ENCODE measurements at regions of chr1 and their contacts with region 1.

Region 1: GRCh38 chr1:62870148-62870547 is 86.2 kb downstream of the ATG4C start:
- ATAC-seq: no peak
- H3K4me3 ChIP-seq: no peak overlapping the region
- H3K27ac ChIP-seq: no peak overlapping the region
- H3K4me1 ChIP-seq: peaks cover 0 to under 1% of the 10 kb centered on the region in 2 donors

Region 2: GRCh38 chr1:62765981-62766380 is 104.2 kb before region 1 on chr1:
- in situ Hi-C with region 1: no loop called
- ATAC-seq: no peak
- H3K4me3 ChIP-seq: no peak overlapping the region
- H3K27ac ChIP-seq: no peak overlapping the region
- H3K4me1 ChIP-seq: no peaks in the 10 kb centered on the region

Region 3: DNA sequence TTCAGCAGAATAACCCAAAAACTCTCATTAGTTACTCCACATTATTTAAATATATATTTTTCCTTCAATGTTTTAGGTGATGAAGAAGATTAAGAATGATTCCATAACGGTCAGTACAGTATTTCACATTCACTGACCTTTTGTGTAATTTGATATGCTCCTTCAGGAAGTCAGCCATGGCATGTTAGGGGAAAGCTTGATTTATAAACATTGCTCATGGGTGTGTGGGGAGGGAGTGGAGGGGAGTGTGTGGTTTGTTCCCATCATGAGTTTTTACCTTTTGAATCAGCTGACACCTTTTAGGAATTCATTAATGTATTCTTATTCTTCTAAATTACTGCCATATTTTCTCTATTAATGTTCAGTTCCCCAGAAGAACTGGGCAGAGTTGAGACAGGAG is 154.0 kb after region 1 on chr1:
- in situ Hi-C with region 1: no loop called
- ATAC-seq: peak in 1 of 8 experiments; percentile 23
- H3K4me3 ChIP-seq: no peak overlapping the region
- H3K27ac ChIP-seq: no peak overlapping the region
- H3K4me1 ChIP-seq: no peaks in the 10 kb centered on the region

Region 4: GRCh38 chr1:63148825-63149645 is 278.9 kb after region 1 on chr1:
- in situ Hi-C with region 1: loop called in 1 of 9 experiments (anchors 25 kb)
- ATAC-seq: peak in 5 of 8 experiments; percentile 21 to 81 (median 69)
- H3K4me3 ChIP-seq: no peak overlapping the region
- H3K27ac ChIP-seq: no peak overlapping the region
- H3K4me1 ChIP-seq: no peaks in the 10 kb centered on the region